GM18951 (cell line): ENCODE measurements at regions of chr3 and their contacts with region 1.

Region 1: GRCh38 chr3:66998113-66998903 is at the start of gene KBTBD8:
- POLR2A ChIP-seq: peak; percentile 71

Region 2: DNA sequence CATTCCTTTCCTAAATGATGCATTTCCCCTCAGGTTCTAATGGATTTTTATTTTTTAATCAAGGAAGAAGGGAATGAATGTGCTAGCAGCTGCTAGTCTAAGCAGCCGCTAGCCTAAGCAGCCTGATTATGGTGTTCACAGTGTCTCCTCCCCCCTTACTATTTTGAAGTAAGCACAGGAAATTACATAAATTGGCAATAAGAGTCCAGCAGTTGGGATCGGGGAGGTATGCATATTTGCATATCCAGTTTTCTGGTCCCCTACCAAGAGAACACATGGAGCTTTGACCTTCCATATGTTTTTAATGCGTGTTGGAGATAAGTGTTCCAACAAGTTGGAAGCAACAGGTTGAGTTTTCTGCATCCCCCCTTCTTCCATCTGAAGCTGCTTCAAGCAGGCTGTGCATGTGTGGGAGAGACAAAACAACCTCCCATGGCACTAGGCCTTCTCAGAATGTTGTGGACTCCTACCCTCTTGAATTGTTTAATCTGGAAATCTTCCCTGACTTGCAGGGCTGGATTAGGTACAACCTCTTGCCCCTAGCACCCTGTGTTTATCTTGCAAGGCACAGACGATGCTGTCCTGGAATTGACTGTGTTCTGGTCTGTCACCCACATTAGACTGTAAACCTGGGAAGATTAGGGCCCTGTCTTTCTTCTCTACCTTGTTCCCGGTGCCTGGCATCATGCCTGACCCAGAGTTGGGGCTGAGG is 372.6 kb before region 1 on chr3:
- in situ Hi-C with region 1: no loop called
- POLR2A ChIP-seq: no peak

Region 3: GRCh38 chr3:67357610-67358458 is 359.5 kb after region 1 on chr3:
- in situ Hi-C with region 1: loop called (anchors 25 kb)
- POLR2A ChIP-seq: no peak